ENCODE measurements at regions of chr22 and their contacts with region 1.

Region 1: DNA sequence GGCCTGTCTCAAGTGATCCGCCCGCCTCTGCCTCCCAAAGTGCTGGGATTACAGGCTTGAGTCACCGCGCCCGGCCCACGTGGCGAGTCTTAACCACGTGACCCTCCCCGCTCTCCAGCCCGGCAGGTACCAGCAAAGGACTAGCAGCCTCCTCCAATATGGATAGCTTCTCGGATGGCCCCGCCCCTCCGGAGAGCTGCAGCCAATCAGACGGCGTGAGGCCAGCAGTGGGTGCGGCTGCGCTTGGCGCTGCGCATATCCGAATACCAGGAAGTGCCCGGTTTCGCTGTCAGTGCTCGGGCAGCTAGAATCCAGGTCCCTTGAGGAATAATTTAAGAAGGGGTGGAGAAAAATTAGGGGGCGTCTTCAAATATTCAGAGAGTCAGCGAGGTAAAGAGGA is 14.7 kb upstream of the PISD start:
- DNase-seq: peak; percentile 98

Region 2: GRCh38 chr22:31630331-31631329 is 46.1 kb before region 1 on chr22:
- intact Hi-C with region 1: no loop called
- DNase-seq: peak; percentile 96

Region 3: DNA sequence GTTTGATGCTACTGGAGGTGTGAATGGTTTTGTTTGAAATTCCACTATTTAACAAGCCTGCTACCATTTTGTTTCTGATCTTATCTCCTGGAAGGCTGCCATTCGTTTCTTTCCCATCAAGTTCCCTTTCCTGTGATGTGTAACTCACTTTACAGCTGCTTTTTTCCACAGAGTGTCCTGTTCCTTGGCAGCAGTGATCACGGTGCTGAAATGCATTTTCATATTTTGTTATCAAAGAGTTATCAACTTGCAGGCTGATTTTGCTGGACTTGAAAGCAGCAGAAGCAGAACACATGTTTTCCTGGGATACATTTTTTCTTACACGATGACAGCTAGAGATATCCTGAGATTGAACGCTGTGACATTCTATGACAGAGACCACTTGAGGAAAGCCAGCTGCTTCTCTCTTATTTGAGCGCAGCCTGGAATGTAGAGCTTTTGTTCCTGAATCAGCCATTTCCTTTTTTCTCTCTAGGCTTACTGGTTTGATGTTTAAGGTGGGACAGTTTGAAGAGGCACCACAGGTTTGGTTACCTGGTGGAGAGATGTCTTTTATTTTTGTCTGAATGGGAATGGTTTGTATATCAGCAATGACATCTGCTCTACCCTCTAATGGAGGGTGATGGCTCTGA is 38.6 kb after region 1 on chr22:
- intact Hi-C with region 1: no loop called
- DNase-seq: no peak

Region 4: GRCh38 chr22:31734512-31734911 is 57.8 kb after region 1 on chr22:
- intact Hi-C with region 1: loop called (anchors 10 kb)
- DNase-seq: peak; percentile 13

Region 5: GRCh38 chr22:31753634-31754501 is 77.2 kb after region 1 on chr22 and contains the start of gene DEPDC5:
- intact Hi-C with region 1: no loop called
- DNase-seq: peak; percentile 98
- total RNA-seq, gene DEPDC5: 20.2 to 25.4 TPM

Region 6: GRCh38 chr22:31952459-31952858 is 275.8 kb after region 1 on chr22:
- intact Hi-C with region 1: loop called in 1 of 2 experiments (anchors 10 kb)
- DNase-seq: no peak